ENCODE measurements at regions of chr12 and their contacts with region 1.

Region 1: GRCh38 chr12:20463913-20464524 is 95.7 kb downstream of the PDE3A start:
- DNase-seq: peak; percentile 13
- ATAC-seq: no peak
- H3K4me3 ChIP-seq: no peak overlapping the region
- H3K27ac ChIP-seq: no peak overlapping the region
- H3K4me1 ChIP-seq: no peaks in the 10 kb centered on the region
- H3K27me3 ChIP-seq: no peaks in the 10 kb centered on the region
- CTCF ChIP-seq: peak; percentile 57
- EP300 ChIP-seq: no peak
- POLR2A ChIP-seq: no peak
- RAD21 ChIP-seq: no peak

Region 2: GRCh38 chr12:19031032-19031431 is 1433.0 kb before region 1 on chr12:
- CTCF ChIA-PET with region 1: no interaction called
- POLR2A ChIA-PET with region 1: no interaction called
- in situ Hi-C with region 1: no loop called
- intact Hi-C with region 1: no loop called
- DNase-seq: no peak
- ATAC-seq: no peak
- H3K4me3 ChIP-seq: no peak overlapping the region
- H3K27ac ChIP-seq: no peak overlapping the region
- H3K4me1 ChIP-seq: no peaks in the 10 kb centered on the region
- H3K27me3 ChIP-seq: no peaks in the 10 kb centered on the region; a peak in 1 of 5 replicates
- CTCF ChIP-seq: no peak
- EP300 ChIP-seq: no peak
- POLR2A ChIP-seq: no peak
- RAD21 ChIP-seq: no peak

Region 3: GRCh38 chr12:20376984-20377383 is 87.0 kb before region 1 on chr12:
- CTCF ChIA-PET with region 1: no interaction called
- POLR2A ChIA-PET with region 1: no interaction called
- in situ Hi-C with region 1: no loop called
- intact Hi-C with region 1: no loop called
- DNase-seq: no peak
- ATAC-seq: no peak
- H3K4me3 ChIP-seq: no peak overlapping the region
- H3K27ac ChIP-seq: no peak overlapping the region
- H3K4me1 ChIP-seq: no peaks in the 10 kb centered on the region
- H3K27me3 ChIP-seq: no peaks in the 10 kb centered on the region
- CTCF ChIP-seq: peak; percentile 45
- EP300 ChIP-seq: no peak
- POLR2A ChIP-seq: no peak
- RAD21 ChIP-seq: no peak

Region 4: GRCh38 chr12:20549107-20549719 is 85.2 kb after region 1 on chr12:
- CTCF ChIA-PET with region 1: no interaction called
- POLR2A ChIA-PET with region 1: no interaction called
- in situ Hi-C with region 1: no loop called
- intact Hi-C with region 1: loop called (anchors 2 kb)
- DNase-seq: peak; percentile 4
- ATAC-seq: peak; percentile 76
- H3K4me3 ChIP-seq: no peak overlapping the region
- H3K27ac ChIP-seq: no peak overlapping the region
- H3K4me1 ChIP-seq: no peaks in the 10 kb centered on the region
- H3K27me3 ChIP-seq: no peaks in the 10 kb centered on the region
- CTCF ChIP-seq: peak; percentile 45
- EP300 ChIP-seq: no peak
- POLR2A ChIP-seq: no peak
- RAD21 ChIP-seq: no peak

Region 5: GRCh38 chr12:20601668-20602280 is 137.8 kb after region 1 on chr12:
- CTCF ChIA-PET with region 1: interaction called, 8 read pairs
- POLR2A ChIA-PET with region 1: no interaction called
- in situ Hi-C with region 1: no loop called
- intact Hi-C with region 1: loop called (anchors 2 kb)
- DNase-seq: peak; percentile 28
- ATAC-seq: no peak
- H3K4me3 ChIP-seq: no peak overlapping the region
- H3K27ac ChIP-seq: no peak overlapping the region
- H3K4me1 ChIP-seq: no peaks in the 10 kb centered on the region
- H3K27me3 ChIP-seq: no peaks in the 10 kb centered on the region; a peak in 1 of 5 replicates
- CTCF ChIP-seq: peak; percentile 48
- EP300 ChIP-seq: no peak
- POLR2A ChIP-seq: no peak
- RAD21 ChIP-seq: no peak

Region 6: GRCh38 chr12:20798561-20798960 is 334.5 kb after region 1 on chr12:
- CTCF ChIA-PET with region 1: interaction called, 14 read pairs
- POLR2A ChIA-PET with region 1: no interaction called
- in situ Hi-C with region 1: loop called (anchors 25 kb)
- intact Hi-C with region 1: loop called (anchors 1 kb)
- DNase-seq: peak; percentile 46
- ATAC-seq: peak; percentile 90
- H3K4me3 ChIP-seq: no peak overlapping the region
- H3K27ac ChIP-seq: no peak overlapping the region
- H3K4me1 ChIP-seq: no peaks in the 10 kb centered on the region
- H3K27me3 ChIP-seq: no peaks in the 10 kb centered on the region
- CTCF ChIP-seq: peak; percentile 71
- EP300 ChIP-seq: no peak
- POLR2A ChIP-seq: no peak
- RAD21 ChIP-seq: peak; percentile 61

Region 7: DNA sequence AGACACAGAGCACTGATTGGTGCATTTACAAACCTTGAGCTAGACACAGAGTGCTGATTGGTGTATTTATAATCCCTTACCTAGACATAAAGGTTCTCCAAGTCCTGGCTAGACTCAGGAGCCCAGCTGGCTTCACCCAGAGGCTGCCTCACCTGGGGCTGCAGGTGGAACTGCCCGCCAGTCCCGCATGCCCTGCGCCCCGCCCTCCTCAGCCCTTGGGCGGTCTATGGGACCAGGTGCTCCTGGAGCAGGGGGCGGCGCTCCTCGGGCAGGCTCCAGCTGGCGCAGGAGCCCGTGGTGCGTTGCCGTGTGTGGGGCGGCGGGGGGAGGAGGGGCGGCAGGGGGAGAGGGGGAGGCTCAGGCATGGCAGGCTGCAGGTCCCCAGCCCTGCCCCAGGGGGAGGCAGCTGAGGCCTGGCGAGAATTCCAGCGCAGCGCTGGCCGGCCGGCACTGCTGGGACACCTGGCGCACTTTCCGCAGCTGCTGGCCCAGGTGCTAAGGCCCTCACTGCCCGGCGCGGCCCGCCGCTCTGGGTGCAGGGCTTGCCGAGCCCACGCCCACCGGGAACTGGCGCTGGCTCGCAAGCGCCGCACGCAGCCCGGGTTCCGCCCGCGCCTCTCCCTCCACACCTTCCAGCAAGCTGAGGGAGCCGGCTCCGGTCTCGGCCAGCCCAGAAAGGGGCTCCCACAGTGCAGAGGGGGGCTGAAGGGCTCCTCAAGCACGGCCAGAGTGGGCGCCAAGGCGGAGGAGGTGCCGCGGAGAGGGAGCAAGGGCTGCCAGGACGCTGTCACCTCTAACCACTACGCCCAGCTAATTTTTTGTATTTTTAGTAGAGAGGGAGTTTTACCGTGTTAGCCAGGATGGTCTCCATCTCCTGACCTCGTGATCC is 343.4 kb after region 1 on chr12:
- CTCF ChIA-PET with region 1: no interaction called
- POLR2A ChIA-PET with region 1: no interaction called
- in situ Hi-C with region 1: loop called (anchors 25 kb)
- intact Hi-C with region 1: no loop called
- DNase-seq: no peak
- ATAC-seq: no peak
- H3K4me3 ChIP-seq: no peak overlapping the region
- H3K27ac ChIP-seq: no peak overlapping the region
- H3K4me1 ChIP-seq: peaks cover 14% of the 10 kb centered on the region
- H3K27me3 ChIP-seq: no peaks in the 10 kb centered on the region
- CTCF ChIP-seq: no peak
- EP300 ChIP-seq: no peak
- POLR2A ChIP-seq: no peak
- RAD21 ChIP-seq: no peak

Region 8: GRCh38 chr12:21169878-21170472 is 706.0 kb after region 1 on chr12:
- CTCF ChIA-PET with region 1: no interaction called
- POLR2A ChIA-PET with region 1: no interaction called
- in situ Hi-C with region 1: no loop called
- intact Hi-C with region 1: loop called (anchors 1 kb)
- DNase-seq: peak; percentile 37
- ATAC-seq: peak; percentile 73
- H3K4me3 ChIP-seq: no peak overlapping the region
- H3K27ac ChIP-seq: no peak overlapping the region
- H3K4me1 ChIP-seq: no peaks in the 10 kb centered on the region
- H3K27me3 ChIP-seq: no peaks in the 10 kb centered on the region
- CTCF ChIP-seq: peak; percentile 80
- EP300 ChIP-seq: no peak
- POLR2A ChIP-seq: no peak
- RAD21 ChIP-seq: peak; percentile 62

Measured in HepG2 (cell line).